SK-N-SH (cell line): ENCODE measurements at regions of chr7 and their contacts with region 1.

Region 1: DNA sequence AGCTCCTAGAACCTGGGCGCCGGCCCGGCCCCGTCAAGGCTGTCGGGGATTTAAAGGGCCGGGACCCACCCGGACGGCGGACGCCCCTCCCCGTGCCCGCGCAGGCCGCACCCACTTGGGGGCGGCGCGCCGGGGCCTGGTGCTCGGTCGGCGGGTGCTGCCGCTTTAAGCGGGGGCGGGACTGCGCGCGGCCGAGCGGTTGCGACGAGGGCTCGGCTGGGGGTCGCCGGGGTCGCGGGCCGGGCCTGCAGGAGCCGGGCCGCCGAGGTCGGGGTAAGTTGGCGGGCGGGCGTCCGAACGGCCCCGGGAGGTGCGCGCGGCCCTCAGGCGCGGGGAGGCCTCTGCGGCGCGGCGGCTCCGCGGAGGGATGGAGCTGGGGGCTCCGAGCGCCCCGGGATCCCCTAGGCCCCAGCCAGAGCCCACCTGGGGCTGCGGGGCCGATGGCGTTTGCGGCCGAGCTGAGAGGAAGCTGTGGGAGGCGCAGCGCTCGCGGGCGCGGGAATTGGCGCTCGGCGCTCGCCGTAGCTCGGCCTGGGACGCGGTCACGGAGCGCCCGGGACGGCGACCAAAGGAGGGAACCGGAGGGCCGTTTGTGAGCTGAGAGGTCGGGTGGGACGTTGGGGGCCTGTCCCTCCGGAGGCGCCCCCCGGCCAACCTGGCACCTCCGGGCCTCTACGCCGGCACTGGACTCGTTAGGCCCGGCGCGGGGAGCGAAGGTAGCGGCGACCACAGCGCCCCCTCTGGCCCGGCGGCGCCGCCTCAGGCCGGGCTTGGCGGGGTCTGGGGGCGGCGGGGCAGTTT is at the start of gene TRRAP:
- DNase-seq: peak; percentile 98
- H3K4me3 ChIP-seq: peak within 1 kb of the TSS; percentile 75 to 99
- H3K27ac ChIP-seq: peak within 1 kb of the TSS; percentile 73 to 89
- H3K4me1 ChIP-seq: peaks cover 0 to 15% of the 10 kb centered on the region in 2 experiments; a peak in 1 of 4 replicates
- H3K27me3 ChIP-seq: no peaks in the 10 kb centered on the region
- CTCF ChIP-seq: peak; percentile 87
- EP300 ChIP-seq: 0 out of 4 replicates have a peak, but pooled peaks of 1 of the 2 experiments have one; percentile 24
- RAD21 ChIP-seq: no peak
- polyA plus RNA-seq, gene TRRAP: 19.6 and 24.9 TPM in 2 replicates

Region 2: GRCh38 chr7:98864731-98865453 is 13.7 kb before region 1 on chr7:
- CTCF ChIA-PET with region 1: interaction called, 34 read pairs
- POLR2A ChIA-PET with region 1: interaction called, 20 read pairs
- DNase-seq: no peak
- H3K4me3 ChIP-seq: no peak overlapping the region
- H3K27ac ChIP-seq: no peak overlapping the region
- H3K4me1 ChIP-seq: peaks cover 0 to 30% of the 10 kb centered on the region in 2 experiments; a peak in 1 of 4 replicates
- H3K27me3 ChIP-seq: peaks cover 21% of the 10 kb centered on the region
- CTCF ChIP-seq: no peak
- EP300 ChIP-seq: no peak
- RAD21 ChIP-seq: no peak

Region 3: GRCh38 chr7:98892609-98893008 is 14.0 kb after region 1 on chr7:
- CTCF ChIA-PET with region 1: interaction called, 23 read pairs
- POLR2A ChIA-PET with region 1: interaction called, 6 read pairs
- DNase-seq: no peak
- H3K4me3 ChIP-seq: no peak overlapping the region
- H3K27ac ChIP-seq: no peak overlapping the region
- H3K4me1 ChIP-seq: no peaks in the 10 kb centered on the region
- H3K27me3 ChIP-seq: no peaks in the 10 kb centered on the region
- CTCF ChIP-seq: no peak
- EP300 ChIP-seq: no peak
- RAD21 ChIP-seq: no peak

Region 4: DNA sequence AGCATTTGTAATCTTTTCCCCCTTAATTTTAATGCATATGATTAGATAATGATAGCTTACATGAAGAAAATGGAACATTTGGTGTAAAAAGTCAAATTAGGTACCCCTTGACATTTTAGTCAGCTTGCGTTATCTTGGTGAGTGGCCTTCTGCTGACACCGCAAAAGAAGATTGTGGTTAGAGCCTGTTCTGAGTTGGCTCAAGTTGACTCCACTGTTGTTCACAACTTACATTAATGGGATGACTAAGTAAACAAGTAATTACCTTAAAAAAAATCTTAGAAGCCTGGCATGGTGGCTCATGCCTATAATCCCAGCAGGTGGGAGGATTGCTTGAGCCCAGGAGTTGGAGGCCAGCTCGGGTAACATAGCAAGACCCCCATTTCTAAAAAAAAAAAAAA is 24.0 kb after region 1 on chr7:
- CTCF ChIA-PET with region 1: interaction called, 12 read pairs
- POLR2A ChIA-PET with region 1: no interaction called
- DNase-seq: no peak
- H3K4me3 ChIP-seq: no peak overlapping the region
- H3K27ac ChIP-seq: no peak overlapping the region
- H3K4me1 ChIP-seq: peaks cover 0 to 6% of the 10 kb centered on the region in 2 experiments; a peak in 1 of 4 replicates
- H3K27me3 ChIP-seq: no peaks in the 10 kb centered on the region
- CTCF ChIP-seq: no peak
- EP300 ChIP-seq: no peak
- RAD21 ChIP-seq: no peak

Region 5: DNA sequence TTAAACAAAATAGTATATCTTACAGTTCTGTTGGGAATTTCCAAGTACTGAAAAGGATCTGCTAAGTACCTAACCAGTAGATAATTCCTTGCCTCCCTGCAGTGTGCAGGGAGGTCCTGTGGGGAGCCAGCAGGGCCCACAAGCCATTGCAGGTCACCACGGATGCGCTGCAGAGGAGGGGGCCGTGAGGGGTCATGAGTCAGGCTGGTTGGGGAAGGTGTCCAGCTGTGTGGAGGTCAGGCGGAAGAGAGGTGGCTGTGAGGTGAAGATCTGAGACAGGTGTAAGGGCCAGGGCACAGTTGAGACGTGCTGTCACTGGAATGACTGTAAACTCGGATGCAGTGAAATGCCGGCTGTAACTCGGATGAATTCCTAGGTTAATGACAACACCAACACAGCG is 80.4 kb after region 1 on chr7:
- CTCF ChIA-PET with region 1: no interaction called
- POLR2A ChIA-PET with region 1: no interaction called
- DNase-seq: no peak
- H3K4me3 ChIP-seq: no peak overlapping the region
- H3K27ac ChIP-seq: no peak overlapping the region
- H3K4me1 ChIP-seq: peaks cover 0 to 9% of the 10 kb centered on the region in 2 experiments; a peak in 1 of 4 replicates
- H3K27me3 ChIP-seq: no peaks in the 10 kb centered on the region
- CTCF ChIP-seq: no peak
- EP300 ChIP-seq: no peak
- RAD21 ChIP-seq: no peak

Region 6: GRCh38 chr7:99001482-99002145 is 123.0 kb after region 1 on chr7:
- CTCF ChIA-PET with region 1: no interaction called
- POLR2A ChIA-PET with region 1: no interaction called
- DNase-seq: no peak
- H3K4me3 ChIP-seq: no peak overlapping the region
- H3K27ac ChIP-seq: no peak overlapping the region
- H3K4me1 ChIP-seq: no peaks in the 10 kb centered on the region; a peak in 1 of 4 replicates
- H3K27me3 ChIP-seq: no peaks in the 10 kb centered on the region
- CTCF ChIP-seq: no peak
- EP300 ChIP-seq: no peak
- RAD21 ChIP-seq: no peak